Naive thymus-derived CD8-positive, alpha-beta T cell (primary cell): ENCODE measurements at regions of chr12 and their contacts with region 1.

Region 1: GRCh38 chr12:123453165-123453564 is 4.8 kb upstream of the SNRNP35 start:
- DNase-seq: peak in 5 of 10 donors; percentile 26 to 74 (median 72)
- ATAC-seq: peak in 1 of 2 donors; percentile 21
- H3K4me3 Mint-ChIP-seq: no peak overlapping the region
- H3K27ac Mint-ChIP-seq: no peak overlapping the region
- H3K4me1 Mint-ChIP-seq: peaks cover 6 to 19% (median 12%) of the 10 kb centered on the region in 4 donors
- H3K27me3 Mint-ChIP-seq: no peaks in the 10 kb centered on the region

Region 2: DNA sequence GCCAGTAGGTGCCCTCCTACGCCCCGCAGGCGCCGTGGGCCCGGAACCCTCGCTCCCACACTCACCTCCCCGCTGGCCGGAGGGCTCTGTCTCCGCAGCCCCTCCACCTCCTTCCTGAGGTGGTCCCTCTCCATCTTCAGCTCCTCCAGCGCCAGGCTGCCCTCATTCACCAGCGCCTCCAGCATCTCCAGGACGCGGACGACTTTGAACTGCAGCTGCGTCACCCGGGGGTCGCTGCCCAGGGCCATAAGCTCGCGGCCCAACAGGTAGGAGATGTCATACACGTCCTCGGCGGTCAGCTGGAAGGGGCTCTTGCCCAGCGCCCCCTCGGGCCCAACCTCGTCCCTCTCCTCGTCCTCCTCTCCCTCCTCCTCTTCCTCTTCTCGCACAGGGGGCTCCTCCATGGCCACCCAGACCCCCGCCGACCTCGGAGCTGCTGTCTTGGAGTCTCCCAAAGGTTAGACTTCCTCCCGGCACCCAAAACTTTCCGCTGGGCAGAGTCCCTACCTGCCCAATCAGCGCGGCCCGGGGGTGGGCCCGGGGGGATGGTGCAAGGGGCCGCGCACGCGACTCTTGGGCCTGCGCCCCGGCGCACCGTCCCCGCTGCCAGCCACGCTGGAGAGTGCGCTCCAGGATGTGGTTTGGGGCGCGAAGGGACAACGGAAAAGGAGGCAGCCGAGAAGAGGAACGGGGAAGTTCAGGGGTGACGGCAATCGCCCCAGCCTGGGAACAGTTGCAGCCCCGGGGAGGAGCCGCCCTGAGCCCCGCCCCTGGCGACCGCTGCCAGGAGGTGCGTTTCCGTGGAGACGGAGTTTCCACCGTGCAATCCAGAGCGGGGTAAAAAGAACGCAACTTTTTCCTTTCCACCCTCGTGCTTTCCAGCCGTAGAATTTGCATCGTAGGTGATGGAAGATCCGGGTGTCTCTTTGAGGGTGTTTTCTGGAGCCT is 16.9 kb before region 1 on chr12 and contains the start of gene RILPL2:
- POLR2A ChIA-PET with region 1: interaction called, 16 read pairs
- DNase-seq: peak; percentile 82 to 93 (median 87)
- ATAC-seq: peak; percentile 85 to 92
- H3K4me3 Mint-ChIP-seq: peak within 1 kb of the TSS; percentile 91 to 98 (median 94)
- H3K27ac Mint-ChIP-seq: peak within 1 kb of the TSS; percentile 85 to 97 (median 92)
- H3K4me1 Mint-ChIP-seq: peaks cover 12 to 51% (median 42%) of the 10 kb centered on the region in 4 donors
- H3K27me3 Mint-ChIP-seq: no peaks in the 10 kb centered on the region
- polyA plus RNA-seq, gene RILPL2: 3.2 to 4.4 (median 3.9) TPM